K562 (cell line): ENCODE measurements at regions of chr1 and their contacts with region 1.

Region 1: GRCh38 chr1:89358287-89358893 is 5.5 kb upstream of the GBP6 start:
- DNase-seq: peak; percentile 23 to 74 (median 44)
- ATAC-seq: peak; percentile 98
- H3K4me3 ChIP-seq: no peak overlapping the region
- H3K27ac ChIP-seq: no peak overlapping the region
- H3K4me1 ChIP-seq: no peaks in the 10 kb centered on the region
- H3K27me3 ChIP-seq: 0 out of 5 replicates have a peak, but pooled peaks cover 0 to 4% of the 10 kb centered on the region in 2 experiments
- CTCF ChIP-seq: peak; percentile 73 to 80 (median 79)
- EP300 ChIP-seq: no peak
- POLR2A ChIP-seq: no peak
- RAD21 ChIP-seq: peak; percentile 83 to 88

Region 2: DNA sequence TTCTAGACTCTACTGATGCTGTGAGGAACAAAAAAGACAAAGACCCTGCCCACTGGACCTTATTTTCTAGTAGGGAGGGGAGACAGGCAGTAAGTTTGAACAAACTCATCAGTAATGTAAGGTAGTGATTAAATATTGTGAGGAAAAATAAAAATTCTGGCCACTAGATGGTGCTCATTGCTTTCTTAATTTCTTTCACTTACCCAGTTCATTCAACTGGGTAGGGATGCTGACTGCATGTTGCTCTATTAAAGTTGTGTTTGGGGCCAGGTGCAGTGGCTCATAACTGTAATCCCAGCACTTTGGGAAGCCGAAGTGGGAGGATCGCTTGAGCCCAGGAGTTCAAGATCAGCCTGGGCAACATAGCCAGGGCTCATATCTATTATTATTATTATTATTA is 359.7 kb before region 1 on chr1:
- CTCF ChIA-PET with region 1: interaction called, 10 read pairs
- POLR2A ChIA-PET with region 1: no interaction called
- in situ Hi-C with region 1: no loop called
- intact Hi-C with region 1: loop called (anchors 1 kb)
- DNase-seq: peak; percentile 38 to 74 (median 43)
- ATAC-seq: peak; percentile 93
- H3K4me3 ChIP-seq: no peak overlapping the region
- H3K27ac ChIP-seq: no peak overlapping the region
- H3K4me1 ChIP-seq: peaks cover 1% of the 10 kb centered on the region in 2 experiments; a peak in 2 of 5 replicates
- H3K27me3 ChIP-seq: peaks cover 0 to 3% of the 10 kb centered on the region in 2 experiments; a peak in 1 of 5 replicates
- CTCF ChIP-seq: peak; percentile 33 to 72 (median 35); a peak in 4 of 6 replicates
- EP300 ChIP-seq: no peak
- POLR2A ChIP-seq: no peak
- RAD21 ChIP-seq: peak; percentile 78 to 82

Region 3: DNA sequence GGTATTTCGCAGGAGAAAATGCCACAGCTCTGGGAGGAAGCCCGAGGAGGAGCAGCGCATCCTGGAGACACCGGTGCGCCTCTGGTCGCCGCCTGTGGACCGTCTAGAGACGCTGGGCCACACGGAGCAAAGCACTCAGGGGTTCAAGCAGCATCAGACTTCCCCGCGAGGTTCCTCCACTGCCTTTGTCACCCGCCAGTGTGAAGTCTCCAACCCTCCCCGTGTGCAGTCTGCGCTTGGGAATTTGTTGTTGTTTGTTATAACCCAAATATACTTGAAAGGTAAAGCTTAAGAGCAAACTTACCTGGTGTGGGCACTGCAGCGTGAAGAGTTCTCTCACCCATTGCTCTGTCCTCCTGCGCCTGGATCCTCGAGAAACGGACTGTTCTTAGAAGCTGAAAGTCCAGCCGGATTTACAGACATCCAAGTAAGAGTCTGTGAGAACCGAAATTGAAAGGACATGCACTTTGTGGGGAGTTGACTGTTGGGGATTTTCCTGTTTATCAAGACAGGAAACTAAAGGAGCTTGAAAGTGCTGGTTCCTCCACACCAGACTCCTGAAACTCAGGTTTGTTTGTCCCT is 159.8 kb before region 1 on chr1 and contains the start of gene GBP4:
- CTCF ChIA-PET with region 1: no interaction called
- POLR2A ChIA-PET with region 1: no interaction called
- in situ Hi-C with region 1: no loop called
- intact Hi-C with region 1: loop called (anchors 10 kb)
- DNase-seq: no peak
- ATAC-seq: peak; percentile 73
- H3K4me3 ChIP-seq: no peak within 1 kb of the TSS
- H3K27ac ChIP-seq: no peak within 1 kb of the TSS
- H3K4me1 ChIP-seq: no peaks in the 10 kb centered on the region
- H3K27me3 ChIP-seq: peaks cover 5 to 8% of the 10 kb centered on the region in 2 experiments; a peak in 2 of 5 replicates
- CTCF ChIP-seq: no peak
- EP300 ChIP-seq: no peak
- POLR2A ChIP-seq: no peak
- RAD21 ChIP-seq: no peak
- polyA plus RNA-seq, gene GBP4: 0.04 to 0.11 TPM